H1 (cell line): ENCODE measurements at regions of chr17 and their contacts with region 1.

Region 1: DNA sequence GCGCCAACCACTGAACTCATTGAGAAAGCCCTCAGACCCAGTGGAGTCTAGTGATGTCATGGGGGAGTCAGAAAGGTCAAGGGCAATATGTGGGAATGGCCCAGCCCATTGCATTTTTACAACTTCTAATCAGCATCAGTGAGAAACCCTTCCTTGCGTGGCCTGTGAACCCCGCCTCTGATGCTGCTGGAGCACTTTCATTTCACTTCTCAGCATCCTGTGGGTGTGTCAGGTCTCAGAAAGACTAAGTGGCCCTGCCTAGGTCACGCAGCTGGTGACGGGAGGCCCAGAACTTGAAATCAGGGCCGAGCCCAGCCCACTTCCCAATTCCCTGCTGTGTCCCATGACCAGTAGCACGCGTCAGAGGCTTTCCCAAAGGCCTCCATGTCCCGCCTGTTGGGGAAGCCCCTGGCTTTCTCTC is 6.1 kb downstream of the DNAI2 start:
- DNase-seq: no peak
- H3K4me3 ChIP-seq: no peak overlapping the region
- H3K27ac ChIP-seq: no peak overlapping the region
- H3K4me1 ChIP-seq: peaks cover 0 to 3% (median 2%) of the 10 kb centered on the region in 4 experiments; a peak in 3 of 7 replicates
- H3K27me3 ChIP-seq: peaks cover 0 to 2% (median under 1%) of the 10 kb centered on the region in 4 experiments; a peak in 4 of 7 replicates
- CTCF ChIP-seq: no peak
- EP300 ChIP-seq: no peak
- POLR2A ChIP-seq: no peak
- RAD21 ChIP-seq: no peak

Region 2: DNA sequence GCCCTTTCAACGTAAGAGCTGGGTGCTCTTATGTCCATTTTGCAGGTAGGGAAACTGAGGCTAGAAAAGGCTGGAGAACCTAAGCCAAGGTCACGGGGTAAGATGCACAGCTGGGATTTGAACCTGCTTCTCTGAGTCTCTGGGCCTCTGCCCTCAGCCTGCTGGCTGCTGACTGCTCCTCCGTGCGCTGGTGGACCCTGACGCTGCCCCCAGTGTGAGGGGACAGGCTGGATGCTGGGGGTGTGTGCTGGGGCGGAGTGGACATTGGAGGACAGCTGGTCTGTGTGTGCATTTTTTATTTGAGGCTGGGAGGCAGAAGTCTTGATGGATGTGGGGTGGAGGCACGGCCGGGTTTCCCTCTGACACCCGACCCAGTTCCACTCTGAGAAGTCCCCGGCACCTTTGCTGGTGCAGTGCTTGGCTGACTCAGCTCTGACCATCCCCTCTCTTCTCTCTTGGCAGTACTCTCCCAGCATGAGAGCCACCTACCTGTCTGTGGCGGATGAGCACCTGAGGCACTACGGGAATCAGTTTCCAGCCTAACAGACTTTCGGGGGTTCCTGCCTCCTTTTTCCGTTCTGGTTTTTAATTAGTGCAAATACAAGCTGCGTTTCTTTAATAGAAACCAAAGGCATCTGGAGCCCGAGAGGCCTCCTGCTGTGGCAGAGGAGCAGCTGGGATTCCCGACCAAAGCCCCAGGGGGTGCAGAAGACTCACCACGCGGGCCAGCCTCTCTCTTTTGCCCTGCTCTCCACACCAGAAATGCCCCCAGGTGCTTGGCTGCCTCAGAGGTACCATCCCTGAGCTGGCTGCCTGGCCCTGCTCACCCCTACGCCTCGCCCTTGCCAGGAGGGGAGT is 20.2 kb before region 1 on chr17:
- CTCF ChIA-PET with region 1: interaction called, 16 read pairs
- POLR2A ChIA-PET with region 1: no interaction called
- DNase-seq: peak in 1 of 2 experiments; percentile 56
- H3K4me3 ChIP-seq: peak overlapping the region in 2 of 4 experiments; percentile 2 to 25; a peak in 1 of 8 replicates
- H3K27ac ChIP-seq: no peak overlapping the region
- H3K4me1 ChIP-seq: peaks cover 0 to 21% (median 13%) of the 10 kb centered on the region in 4 experiments; a peak in 6 of 7 replicates
- H3K27me3 ChIP-seq: no peaks in the 10 kb centered on the region
- CTCF ChIP-seq: peak in 2 of 3 experiments; percentile 28 to 34; a peak in 3 of 4 replicates
- EP300 ChIP-seq: no peak
- POLR2A ChIP-seq: no peak
- RAD21 ChIP-seq: peak in 1 of 2 experiments; percentile 34; a peak in 1 of 4 replicates

Region 3: DNA sequence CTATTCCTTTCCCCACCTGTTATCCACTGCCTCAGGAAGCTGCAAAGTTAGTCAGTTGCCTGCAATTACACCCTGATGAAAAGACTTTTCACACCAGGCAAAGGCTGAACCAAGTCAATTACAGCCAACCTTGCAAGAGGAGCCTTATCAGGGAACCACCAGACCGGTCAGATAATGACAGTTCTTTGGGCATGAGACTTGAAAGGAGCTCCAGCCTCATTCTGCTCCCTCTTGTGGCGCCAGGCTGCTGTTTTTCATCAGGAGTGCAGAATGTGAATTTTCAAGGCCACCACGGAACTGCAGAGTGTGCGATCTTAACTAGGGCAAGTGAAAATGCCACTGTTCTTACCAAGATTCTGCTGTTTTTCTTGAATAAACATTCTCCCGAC is 16.4 kb after region 1 on chr17:
- CTCF ChIA-PET with region 1: interaction called, 106 read pairs
- POLR2A ChIA-PET with region 1: interaction called, 5 read pairs
- DNase-seq: peak; percentile 23 to 58
- H3K4me3 ChIP-seq: no peak overlapping the region
- H3K27ac ChIP-seq: no peak overlapping the region
- H3K4me1 ChIP-seq: no peaks in the 10 kb centered on the region
- H3K27me3 ChIP-seq: no peaks in the 10 kb centered on the region; a peak in 1 of 7 replicates
- CTCF ChIP-seq: peak; percentile 60 to 80 (median 76)
- EP300 ChIP-seq: no peak
- POLR2A ChIP-seq: no peak
- RAD21 ChIP-seq: peak; percentile 43 to 70; a peak in 3 of 4 replicates

Region 4: GRCh38 chr17:74305865-74306654 is 26.0 kb after region 1 on chr17:
- CTCF ChIA-PET with region 1: interaction called, 106 read pairs
- POLR2A ChIA-PET with region 1: no interaction called
- DNase-seq: no peak
- H3K4me3 ChIP-seq: no peak overlapping the region
- H3K27ac ChIP-seq: no peak overlapping the region
- H3K4me1 ChIP-seq: no peaks in the 10 kb centered on the region
- H3K27me3 ChIP-seq: no peaks in the 10 kb centered on the region
- CTCF ChIP-seq: peak in 2 of 3 experiments; percentile 43 to 57; a peak in 3 of 4 replicates
- EP300 ChIP-seq: no peak
- POLR2A ChIP-seq: no peak
- RAD21 ChIP-seq: peak; percentile 62 to 74